ENCODE measurements at regions of chr3 and their contacts with region 1.

Region 1: DNA sequence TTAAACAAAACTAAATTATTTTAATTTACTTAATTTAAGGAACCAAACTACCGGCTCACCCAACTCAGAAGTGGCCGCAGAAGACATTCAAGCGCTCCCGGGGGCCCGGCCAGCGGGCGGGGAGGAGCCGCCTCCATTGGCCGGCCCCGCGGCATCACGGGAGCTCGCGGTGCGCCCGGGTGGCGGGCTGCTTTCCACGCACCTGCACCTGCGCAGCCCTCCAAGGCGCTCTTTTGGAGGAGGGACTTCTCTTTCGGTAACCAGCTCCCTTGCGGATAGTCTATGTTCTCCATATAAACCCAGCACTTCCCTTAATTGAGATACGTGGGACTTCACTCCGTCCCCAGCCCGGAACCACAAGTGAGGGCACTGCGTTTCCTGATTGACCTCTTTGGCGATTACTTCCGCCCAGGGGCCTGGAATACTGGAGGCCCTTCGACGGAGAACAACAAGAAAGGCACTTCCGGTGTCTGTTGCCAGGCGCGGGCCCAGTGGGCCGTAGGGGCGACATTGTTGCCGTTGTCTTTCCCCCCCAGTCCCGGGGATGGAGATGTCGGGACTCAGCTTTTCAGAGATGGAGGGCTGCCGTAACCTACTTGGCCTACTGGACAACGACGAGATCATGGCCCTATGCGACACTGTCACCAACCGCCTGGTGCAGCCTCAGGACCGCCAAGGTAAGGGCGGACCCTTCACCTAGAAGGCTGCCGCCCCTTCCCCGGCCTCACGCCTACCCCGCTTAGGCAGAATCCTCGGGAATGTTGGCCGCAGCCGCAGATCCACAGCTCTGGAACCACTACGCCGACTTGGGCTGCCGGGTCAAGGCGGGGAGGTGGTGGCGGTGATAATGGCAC is at the start of gene C3orf38:
- DNase-seq: peak; percentile 90 to 93
- H3K4me3 ChIP-seq: peak within 1 kb of the TSS; percentile 74 to 88
- H3K27ac ChIP-seq: peak within 1 kb of the TSS; percentile 92 to 95
- H3K4me1 ChIP-seq: peaks cover 0 to 28% (median 25%) of the 10 kb centered on the region in 4 donors
- H3K27me3 ChIP-seq: no peaks in the 10 kb centered on the region
- CTCF ChIP-seq: no peak

Region 2: GRCh38 chr3:88058591-88059368 is 91.0 kb before region 1 on chr3 and contains the starts of genes CGGBP1 and ZNF654:
- intact Hi-C with region 1: loop called (anchors 5 kb)
- DNase-seq: peak; percentile 99 to 100
- H3K4me3 ChIP-seq: peak within 1 kb of the TSS; percentile 70 to 85
- H3K27ac ChIP-seq: peak within 1 kb of the TSS; percentile 87 to 98
- H3K4me1 ChIP-seq: peaks cover 0 to 42% (median 18%) of the 10 kb centered on the region in 4 donors
- H3K27me3 ChIP-seq: no peaks in the 10 kb centered on the region
- CTCF ChIP-seq: peak in 1 of 2 experiments; percentile 22

Region 3: DNA sequence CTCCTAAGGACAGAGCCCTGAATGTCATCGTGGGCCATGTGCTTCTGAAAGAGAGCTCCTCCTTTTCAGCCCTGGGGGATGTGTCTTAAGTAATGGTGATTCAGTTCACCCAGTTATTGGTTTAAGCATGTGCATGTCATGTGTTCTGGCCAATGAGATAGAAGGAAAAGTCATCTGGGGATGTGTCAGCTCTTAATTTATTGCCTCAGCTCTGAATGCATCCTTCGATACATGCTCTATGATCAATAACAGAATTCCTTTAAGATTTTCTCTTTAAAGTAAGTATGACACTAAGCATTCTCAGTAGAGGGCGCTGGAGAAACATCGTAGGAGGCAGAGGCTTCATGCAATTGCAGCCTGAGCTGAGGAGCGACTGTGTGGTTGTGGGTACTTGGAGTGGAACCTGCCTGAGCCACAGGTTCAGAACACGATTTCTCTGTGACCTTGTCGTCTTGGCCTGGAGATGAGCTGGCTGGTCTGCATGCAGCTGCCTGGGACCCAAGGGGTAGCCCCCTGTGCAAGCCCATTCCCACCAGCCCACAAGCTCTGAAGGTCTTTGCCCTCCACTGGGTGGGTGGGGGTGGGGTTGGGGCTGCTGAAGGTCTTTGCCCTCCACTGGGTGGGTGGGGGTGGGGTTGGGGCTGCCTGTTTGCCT is 69.5 kb after region 1 on chr3:
- intact Hi-C with region 1: no loop called
- DNase-seq: no peak
- H3K4me3 ChIP-seq: no peak overlapping the region
- H3K27ac ChIP-seq: no peak overlapping the region
- H3K4me1 ChIP-seq: no peaks in the 10 kb centered on the region
- H3K27me3 ChIP-seq: no peaks in the 10 kb centered on the region
- CTCF ChIP-seq: peak in 1 of 2 experiments; percentile 15

Measured in tibial artery (tissue), 4 donors.